Activated CD4-positive, alpha-beta memory T cell treated with anti-CD3 and anti-CD28 coated beads for 36 hours (primary cell): ENCODE measurements at regions of chr3 and their contacts with region 1.

Region 1: DNA sequence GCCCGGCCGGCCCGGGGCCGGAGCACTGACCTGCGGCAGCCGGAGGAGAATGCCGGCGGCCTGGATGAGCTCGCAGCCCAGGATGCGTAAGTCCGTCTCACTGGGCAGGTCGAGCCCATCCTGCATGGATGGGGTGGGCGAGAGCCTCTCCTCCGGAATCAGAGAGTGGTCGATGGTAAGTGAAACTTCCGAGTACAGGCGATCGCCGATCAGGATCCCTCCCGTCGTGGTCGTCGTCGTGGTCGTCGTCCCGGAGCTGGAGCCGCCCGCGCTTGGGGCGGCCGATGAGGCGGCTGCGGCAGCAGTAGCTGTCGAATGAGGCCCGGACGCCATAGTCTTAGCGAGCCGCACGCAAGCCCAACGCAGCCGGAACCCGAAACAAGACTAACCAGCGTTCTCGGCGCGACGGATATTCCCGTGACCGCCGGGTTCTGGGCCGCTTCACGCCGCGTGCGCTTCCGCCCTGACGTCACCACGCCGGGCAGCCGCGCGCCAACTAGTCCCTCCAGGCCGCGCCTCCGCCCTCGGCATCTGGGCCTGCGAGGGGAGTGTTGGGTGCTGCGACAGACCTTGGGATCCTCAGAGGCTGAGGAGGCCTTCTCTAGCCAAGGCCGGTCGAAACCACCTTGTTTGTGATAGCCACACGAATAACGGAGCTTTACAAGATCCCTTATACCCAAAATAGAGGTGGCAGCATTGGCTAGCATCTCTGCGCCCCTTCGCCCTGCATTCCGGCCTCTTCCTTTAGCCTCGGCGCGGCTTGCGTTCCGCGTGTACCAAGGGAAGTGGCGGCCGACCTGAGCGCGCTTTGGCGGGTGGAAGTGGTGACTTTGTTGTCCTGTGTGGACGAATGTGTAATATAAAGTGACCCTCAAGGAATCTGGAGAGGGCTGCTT is at the start of gene CCNL1:
- DNase-seq: peak; percentile 96
- H3K4me3 Mint-ChIP-seq: peak within 1 kb of the TSS; percentile 94
- H3K27ac Mint-ChIP-seq: peak within 1 kb of the TSS; percentile 99
- H3K4me1 Mint-ChIP-seq: peaks cover 46% of the 10 kb centered on the region
- H3K27me3 Mint-ChIP-seq: peaks cover 2% of the 10 kb centered on the region
- total RNA-seq, gene CCNL1: 144 to 150 TPM

Region 2: GRCh38 chr3:156816800-156817645 is 343.0 kb before region 1 on chr3:
- CTCF ChIA-PET with region 1: no interaction called
- POLR2A ChIA-PET with region 1: interaction called, 4 read pairs
- intact Hi-C with region 1: loop called (anchors 2 kb)
- DNase-seq: peak; percentile 92
- H3K4me3 Mint-ChIP-seq: peak overlapping the region; percentile 85
- H3K27ac Mint-ChIP-seq: peak overlapping the region; percentile 90
- H3K4me1 Mint-ChIP-seq: peaks cover 43% of the 10 kb centered on the region
- H3K27me3 Mint-ChIP-seq: no peaks in the 10 kb centered on the region

Region 3: GRCh38 chr3:157148196-157148889 is 11.7 kb before region 1 on chr3:
- CTCF ChIA-PET with region 1: interaction called, 3 read pairs
- POLR2A ChIA-PET with region 1: interaction called, 51 read pairs
- intact Hi-C with region 1: loop called (anchors 1 kb)
- DNase-seq: peak; percentile 53
- H3K4me3 Mint-ChIP-seq: peak overlapping the region; percentile 6
- H3K27ac Mint-ChIP-seq: peak overlapping the region; percentile 80
- H3K4me1 Mint-ChIP-seq: peaks cover 53% of the 10 kb centered on the region
- H3K27me3 Mint-ChIP-seq: no peaks in the 10 kb centered on the region

Region 4: DNA sequence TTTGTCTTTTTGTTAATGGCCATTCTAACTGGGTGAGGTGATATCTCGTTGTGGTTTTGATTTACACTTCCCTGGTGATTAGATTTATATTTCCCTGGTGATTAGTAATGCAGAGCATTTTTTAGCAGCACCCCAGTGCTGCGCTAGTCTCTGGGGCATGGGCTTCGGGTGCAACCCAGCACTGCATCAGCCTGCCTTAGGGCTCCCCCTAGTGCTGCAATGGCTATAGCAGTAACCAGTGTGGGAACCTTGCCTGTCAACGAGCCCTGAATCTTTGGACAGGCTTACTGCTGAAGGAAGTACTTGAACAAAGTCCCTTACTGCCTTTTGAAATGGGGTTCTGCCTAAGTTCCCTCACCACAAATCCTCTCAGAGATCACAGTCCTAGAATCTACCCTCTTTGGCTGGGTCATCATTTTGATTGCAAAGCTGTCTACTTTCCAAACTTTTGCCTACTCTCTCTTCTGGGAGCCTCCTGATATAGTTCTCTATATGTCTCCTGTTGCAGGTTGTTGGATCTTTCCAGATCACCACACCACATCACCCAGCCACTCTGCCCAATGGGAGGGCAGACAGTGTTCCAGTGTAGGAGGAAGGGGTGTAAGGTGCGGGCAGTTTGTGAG is 79.2 kb after region 1 on chr3:
- CTCF ChIA-PET with region 1: interaction called, 4 read pairs
- POLR2A ChIA-PET with region 1: interaction called, 4 read pairs
- intact Hi-C with region 1: loop called (anchors 1 kb)
- DNase-seq: peak; percentile 85
- H3K4me3 Mint-ChIP-seq: no peak overlapping the region
- H3K27ac Mint-ChIP-seq: no peak overlapping the region
- H3K4me1 Mint-ChIP-seq: peaks cover 3% of the 10 kb centered on the region
- H3K27me3 Mint-ChIP-seq: no peaks in the 10 kb centered on the region